AG04450 (cell line): ENCODE measurements at regions of chr10 and their contacts with region 1.

Region 1: DNA sequence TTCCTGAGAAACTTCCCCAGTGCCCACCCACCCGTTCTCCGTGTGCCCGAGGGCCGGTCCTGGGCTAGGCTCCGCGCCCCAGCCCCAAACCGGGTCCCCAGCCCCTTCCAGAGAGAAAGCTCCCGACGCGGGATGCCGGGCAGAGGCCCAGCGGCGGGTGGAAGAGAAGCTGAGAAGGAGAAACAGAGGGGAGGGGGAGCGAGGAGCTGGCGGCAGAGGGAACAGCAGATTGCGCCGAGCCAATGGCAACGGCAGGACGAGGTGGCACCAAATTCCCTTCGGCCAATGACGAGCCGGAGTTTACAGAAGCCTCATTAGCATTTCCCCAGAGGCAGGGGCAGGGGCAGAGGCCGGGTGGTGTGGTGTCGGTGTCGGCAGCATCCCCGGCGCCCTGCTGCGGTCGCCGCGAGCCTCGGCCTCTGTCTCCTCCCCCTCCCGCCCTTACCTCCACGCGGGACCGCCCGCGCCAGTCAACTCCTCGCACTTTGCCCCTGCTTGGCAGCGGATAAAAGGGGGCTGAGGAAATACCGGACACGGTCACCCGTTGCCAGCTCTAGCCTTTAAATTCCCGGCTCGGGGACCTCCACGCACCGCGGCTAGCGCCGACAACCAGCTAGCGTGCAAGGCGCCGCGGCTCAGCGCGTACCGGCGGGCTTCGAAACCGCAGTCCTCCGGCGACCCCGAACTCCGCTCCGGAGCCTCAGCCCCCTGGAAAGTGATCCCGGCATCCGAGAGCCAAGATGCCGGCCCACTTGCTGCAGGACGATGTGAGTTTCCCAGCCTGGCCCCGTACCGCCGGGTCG is at the start of gene SCD:
- DNase-seq: peak; percentile 72
- H3K4me3 ChIP-seq: peak within 1 kb of the TSS; percentile 86
- H3K27ac ChIP-seq: peak within 1 kb of the TSS; percentile 57
- H3K27me3 ChIP-seq: no peaks in the 10 kb centered on the region
- CTCF ChIP-seq: no peak
- polyA plus RNA-seq, gene SCD: 133 and 148 TPM in 2 replicates

Region 2: DNA sequence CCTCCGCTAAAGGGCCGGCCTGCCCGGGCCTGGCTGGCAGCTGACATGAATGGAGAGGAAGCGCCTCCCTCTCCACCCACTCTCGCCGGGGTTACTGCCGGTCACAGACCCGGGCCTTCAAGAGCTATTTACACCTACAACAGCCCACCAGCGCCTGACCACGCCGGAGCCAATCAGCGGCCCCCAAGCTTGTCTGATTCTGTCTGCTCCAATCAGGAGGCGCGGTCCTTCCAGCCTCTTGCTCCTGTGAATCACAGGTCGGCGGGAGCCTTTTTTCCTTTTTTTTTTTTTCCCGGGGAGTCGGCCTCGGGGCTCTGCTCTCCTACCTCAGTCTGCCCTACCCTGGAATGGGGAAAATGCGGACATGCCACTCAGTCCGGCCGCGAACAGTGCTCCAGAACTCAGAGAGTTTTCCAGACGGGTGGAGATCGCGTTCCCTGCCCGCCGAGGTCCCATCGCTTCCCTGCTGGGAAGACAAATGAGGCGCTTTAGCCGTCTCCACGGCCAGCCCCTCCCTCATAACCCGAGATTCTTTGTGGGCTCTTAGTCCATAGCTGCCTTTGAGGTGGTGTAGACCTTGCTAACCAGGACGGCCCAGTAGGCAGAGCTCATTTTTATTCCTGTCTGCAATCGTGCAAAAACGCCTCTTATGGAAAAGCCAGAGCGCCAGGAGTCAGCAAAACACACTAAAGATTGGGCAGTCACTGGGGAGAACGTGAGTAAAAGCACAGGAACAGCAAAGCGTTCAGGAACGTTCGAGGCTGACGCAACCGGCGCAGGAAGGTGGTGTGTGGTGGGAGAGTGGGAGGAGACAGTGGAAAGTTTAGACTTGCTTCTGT is 26.6 kb after region 1 on chr10:
- CTCF ChIA-PET with region 1: interaction called, 9 read pairs
- POLR2A ChIA-PET with region 1: interaction called, 38 read pairs
- DNase-seq: peak; percentile 98
- H3K4me3 ChIP-seq: peak overlapping the region; percentile 74
- H3K27ac ChIP-seq: peak overlapping the region; percentile 100
- H3K27me3 ChIP-seq: no peaks in the 10 kb centered on the region
- CTCF ChIP-seq: no peak